Activated CD8-positive, alpha-beta T cell treated with anti-CD3 and anti-CD28 coated beads for 36 hours (primary cell): ENCODE measurements at regions of chr17 and their contacts with region 1.

Region 1: GRCh38 chr17:59004338-59005111 is 102.2 kb downstream of the TRIM37 start:
- DNase-seq: peak; percentile 85
- ATAC-seq: peak; percentile 63
- H3K4me3 Mint-ChIP-seq: no peak overlapping the region
- H3K27ac Mint-ChIP-seq: peak overlapping the region; percentile 72
- H3K4me1 Mint-ChIP-seq: peaks cover 34% of the 10 kb centered on the region
- H3K27me3 Mint-ChIP-seq: no peaks in the 10 kb centered on the region
- CTCF ChIP-seq: peak; percentile 94

Region 2: DNA sequence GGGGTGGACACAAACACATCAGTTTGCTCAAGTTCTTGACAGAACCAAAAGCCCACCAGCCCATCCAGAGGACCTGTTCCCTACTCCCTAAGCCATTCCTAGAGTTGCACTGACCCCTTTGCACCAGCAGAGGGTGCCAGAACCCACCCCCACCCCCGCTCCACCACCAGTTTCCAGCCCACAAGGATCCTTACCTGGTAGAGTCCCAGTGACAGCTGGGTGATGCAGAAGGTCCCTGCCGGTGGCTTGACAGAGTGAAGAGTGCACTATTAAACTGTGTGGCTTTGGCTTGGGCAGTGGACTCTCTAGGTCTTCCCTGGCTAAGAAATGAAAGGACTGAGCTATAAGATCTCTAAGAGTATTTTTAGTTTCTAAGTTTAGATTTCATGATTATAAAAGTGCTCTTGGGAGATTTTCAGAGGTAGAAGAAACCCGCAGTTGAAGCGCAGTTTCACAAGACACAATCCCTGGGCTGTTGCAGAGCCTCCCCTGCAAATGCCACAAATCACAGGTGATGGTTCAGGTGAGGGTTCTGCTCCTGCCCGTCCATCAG is 416.7 kb before region 1 on chr17:
- CTCF ChIA-PET with region 1: interaction called, 7 read pairs
- POLR2A ChIA-PET with region 1: no interaction called
- intact Hi-C with region 1: loop called (anchors 5 kb)
- DNase-seq: peak; percentile 70
- ATAC-seq: peak; percentile 89
- H3K4me3 Mint-ChIP-seq: no peak overlapping the region
- H3K27ac Mint-ChIP-seq: no peak overlapping the region
- H3K4me1 Mint-ChIP-seq: no peaks in the 10 kb centered on the region
- H3K27me3 Mint-ChIP-seq: no peaks in the 10 kb centered on the region
- CTCF ChIP-seq: peak; percentile 97

Region 3: DNA sequence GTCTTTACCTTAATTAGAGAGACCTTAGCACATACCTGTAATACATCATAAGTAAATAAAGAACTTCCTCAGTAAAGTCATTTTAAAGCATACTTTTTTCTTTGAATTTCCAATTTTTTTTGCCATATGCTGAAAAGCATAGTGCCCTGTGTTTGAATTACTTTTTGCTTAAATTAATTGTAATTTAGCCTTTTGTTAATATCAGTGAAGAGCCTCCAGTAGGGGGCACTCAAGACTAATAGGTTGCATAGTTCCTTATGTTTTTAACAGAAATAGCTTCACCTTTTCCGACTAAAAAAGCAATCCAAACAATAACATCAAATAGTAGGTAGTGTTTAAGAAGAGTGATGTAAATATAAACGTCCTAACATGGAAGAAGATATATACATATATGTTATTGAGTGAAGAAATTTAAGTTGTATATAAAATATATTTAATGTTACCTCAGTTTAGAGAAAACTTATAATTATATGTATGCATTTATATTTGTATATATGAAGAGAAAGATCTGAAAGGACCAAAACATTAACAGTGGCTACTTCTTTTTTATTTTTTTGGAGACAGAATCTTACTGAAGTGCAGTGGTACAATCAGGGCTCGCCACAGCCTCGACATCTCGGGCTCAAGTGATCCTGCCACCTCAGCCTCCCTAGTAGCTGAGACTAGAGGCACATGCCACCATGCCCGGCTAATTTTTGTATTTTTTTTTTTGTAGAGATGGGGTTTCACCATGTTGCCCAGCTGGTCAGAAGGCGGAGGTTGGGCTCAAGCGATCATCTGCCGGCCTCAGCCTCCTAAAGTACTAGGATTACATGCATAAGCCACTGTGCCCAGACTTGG is 293.4 kb before region 1 on chr17:
- CTCF ChIA-PET with region 1: interaction called, 16 read pairs
- POLR2A ChIA-PET with region 1: no interaction called
- intact Hi-C with region 1: loop called (anchors 2 kb)
- DNase-seq: peak; percentile 61
- ATAC-seq: no peak
- H3K4me3 Mint-ChIP-seq: no peak overlapping the region
- H3K27ac Mint-ChIP-seq: no peak overlapping the region
- H3K4me1 Mint-ChIP-seq: peaks cover 10% of the 10 kb centered on the region
- H3K27me3 Mint-ChIP-seq: no peaks in the 10 kb centered on the region
- CTCF ChIP-seq: peak; percentile 87

Region 4: DNA sequence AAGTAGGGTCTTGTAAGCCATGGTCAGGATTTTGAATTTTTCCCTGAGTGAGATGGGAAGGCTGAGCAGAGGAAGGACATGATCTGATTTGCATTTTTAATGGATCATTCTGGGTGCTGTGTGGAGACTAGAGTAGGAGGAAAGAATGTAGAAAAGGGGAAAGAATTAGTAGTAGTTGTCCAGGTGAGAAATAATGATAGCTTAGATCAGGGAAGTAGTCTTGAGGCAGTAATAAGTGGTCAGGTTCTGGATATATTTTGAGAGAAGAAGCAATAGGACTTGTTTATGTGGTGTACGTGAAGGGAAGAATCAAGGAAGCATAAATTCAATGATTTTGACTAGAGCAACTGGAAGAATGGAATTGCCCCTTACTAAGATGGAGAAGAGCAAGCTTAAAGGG is 116.8 kb before region 1 on chr17:
- CTCF ChIA-PET with region 1: no interaction called
- POLR2A ChIA-PET with region 1: no interaction called
- intact Hi-C with region 1: no loop called
- DNase-seq: no peak
- ATAC-seq: no peak
- H3K4me3 Mint-ChIP-seq: no peak overlapping the region
- H3K27ac Mint-ChIP-seq: no peak overlapping the region
- H3K4me1 Mint-ChIP-seq: no peaks in the 10 kb centered on the region
- H3K27me3 Mint-ChIP-seq: peaks cover 12% of the 10 kb centered on the region
- CTCF ChIP-seq: no peak

Region 5: DNA sequence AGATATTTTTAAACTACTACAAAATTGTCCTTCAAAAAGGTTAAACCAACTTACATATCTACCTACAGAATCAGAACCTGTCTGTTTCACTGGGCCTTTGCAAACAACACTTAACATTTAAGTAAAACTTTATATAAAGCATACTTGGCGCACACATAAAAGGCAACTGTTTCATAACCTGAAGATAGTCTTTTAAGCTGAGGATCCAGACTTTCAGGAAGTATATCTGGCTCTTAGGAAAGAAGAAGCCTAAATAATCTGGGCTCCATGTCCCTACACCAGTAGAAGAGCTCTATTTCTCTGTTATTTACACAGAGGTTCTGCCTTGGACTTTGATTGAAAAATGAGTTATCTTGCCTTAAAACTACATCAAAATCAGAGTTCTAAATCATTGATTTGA is 26.3 kb after region 1 on chr17:
- CTCF ChIA-PET with region 1: interaction called, 10 read pairs
- POLR2A ChIA-PET with region 1: no interaction called
- intact Hi-C with region 1: no loop called
- DNase-seq: no peak
- ATAC-seq: no peak
- H3K4me3 Mint-ChIP-seq: no peak overlapping the region
- H3K27ac Mint-ChIP-seq: no peak overlapping the region
- H3K4me1 Mint-ChIP-seq: peaks cover 10% of the 10 kb centered on the region
- H3K27me3 Mint-ChIP-seq: no peaks in the 10 kb centered on the region
- CTCF ChIP-seq: no peak

Region 6: GRCh38 chr17:59041146-59041545 is 36.6 kb after region 1 on chr17:
- CTCF ChIA-PET with region 1: no interaction called
- POLR2A ChIA-PET with region 1: no interaction called
- intact Hi-C with region 1: no loop called
- DNase-seq: no peak
- ATAC-seq: no peak
- H3K4me3 Mint-ChIP-seq: no peak overlapping the region
- H3K27ac Mint-ChIP-seq: no peak overlapping the region
- H3K4me1 Mint-ChIP-seq: no peaks in the 10 kb centered on the region
- H3K27me3 Mint-ChIP-seq: no peaks in the 10 kb centered on the region
- CTCF ChIP-seq: no peak

Region 7: DNA sequence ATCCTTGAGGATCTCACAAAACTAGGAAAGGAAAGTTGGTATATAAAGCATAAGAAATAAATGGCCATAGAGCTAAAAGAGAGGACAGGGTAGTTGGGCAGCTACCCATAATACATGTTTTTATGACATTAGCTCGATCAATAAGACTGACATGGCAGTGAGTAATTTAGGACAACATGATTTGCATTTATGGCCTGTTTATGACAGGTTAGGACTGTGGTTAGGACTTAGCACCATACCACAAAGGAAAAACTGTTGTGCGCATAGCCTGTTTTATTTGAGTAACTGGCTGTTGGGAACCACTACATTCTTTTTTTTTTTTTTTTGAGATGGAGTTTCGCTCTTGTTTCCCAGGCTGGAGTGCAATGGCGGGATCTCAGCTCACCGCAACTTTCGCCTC is 120.1 kb after region 1 on chr17:
- CTCF ChIA-PET with region 1: no interaction called
- POLR2A ChIA-PET with region 1: no interaction called
- intact Hi-C with region 1: no loop called
- DNase-seq: no peak
- ATAC-seq: no peak
- H3K4me3 Mint-ChIP-seq: no peak overlapping the region
- H3K27ac Mint-ChIP-seq: no peak overlapping the region
- H3K4me1 Mint-ChIP-seq: no peaks in the 10 kb centered on the region
- H3K27me3 Mint-ChIP-seq: no peaks in the 10 kb centered on the region
- CTCF ChIP-seq: no peak

Region 8: DNA sequence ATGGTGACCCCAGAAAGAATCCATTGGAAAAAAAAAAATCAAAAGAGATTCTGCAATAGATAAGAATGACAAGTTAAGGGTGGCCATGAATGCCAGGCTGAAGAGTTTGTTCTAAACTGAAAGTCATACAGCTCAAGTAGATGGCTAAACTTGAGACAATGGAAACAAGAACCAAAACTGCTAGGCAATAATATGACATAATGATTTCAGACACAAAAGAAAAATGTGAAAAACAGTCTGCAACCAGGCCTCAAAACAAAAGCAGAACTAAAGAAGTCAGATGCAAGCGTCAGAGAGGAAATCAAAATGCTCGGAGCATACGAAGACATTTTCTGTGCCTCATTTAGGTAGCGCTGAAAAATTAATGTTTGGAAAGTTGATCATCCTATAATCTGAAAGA is 272.5 kb after region 1 on chr17:
- CTCF ChIA-PET with region 1: no interaction called
- POLR2A ChIA-PET with region 1: no interaction called
- intact Hi-C with region 1: no loop called
- DNase-seq: no peak
- ATAC-seq: no peak
- H3K4me3 Mint-ChIP-seq: no peak overlapping the region
- H3K27ac Mint-ChIP-seq: no peak overlapping the region
- H3K4me1 Mint-ChIP-seq: no peaks in the 10 kb centered on the region
- H3K27me3 Mint-ChIP-seq: no peaks in the 10 kb centered on the region
- CTCF ChIP-seq: no peak